Ovary (tissue), 10 donors: ENCODE measurements at regions of chr4 and their contacts with region 1.

Region 1: DNA sequence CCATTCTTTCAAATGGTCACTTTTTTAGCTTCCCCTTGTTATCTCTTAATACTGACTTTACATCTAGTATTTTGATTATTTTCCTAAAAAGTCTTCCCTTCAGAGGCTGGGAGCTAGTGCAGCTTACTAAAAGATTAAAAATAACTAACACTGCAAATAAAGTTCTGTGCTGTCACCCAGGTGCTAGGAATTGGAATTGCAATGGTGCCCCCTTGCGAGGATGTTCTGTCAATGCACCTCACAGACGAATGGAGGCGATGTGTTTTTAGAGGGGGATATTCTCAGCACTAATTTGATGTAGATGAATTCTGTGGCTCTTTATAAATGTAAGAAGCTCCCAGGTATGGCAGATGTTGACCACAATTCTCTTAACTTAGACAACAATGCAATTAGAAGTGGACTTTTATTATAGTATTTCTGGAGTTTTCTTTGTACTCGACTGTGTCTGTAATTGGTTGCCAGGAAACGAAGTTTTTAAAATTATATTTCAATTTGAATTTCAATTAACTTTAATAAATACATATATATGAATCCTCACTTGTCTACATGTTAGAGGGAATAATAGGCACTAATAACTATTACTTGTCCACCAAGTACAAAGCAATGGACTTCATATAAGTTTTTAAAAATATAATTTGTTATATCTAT is 22.0 kb upstream of the SMIM31 start:
- DNase-seq: peak in 3 of 5 donors; percentile 17 to 31 (median 22)
- H3K4me3 ChIP-seq: no peak overlapping the region
- H3K27ac ChIP-seq: no peak overlapping the region
- H3K4me1 ChIP-seq: no peaks in the 10 kb centered on the region
- H3K27me3 ChIP-seq: no peaks in the 10 kb centered on the region
- CTCF ChIP-seq: peak in 2 of 3 donors; percentile 14 to 41
- EP300 ChIP-seq: no peak
- POLR2A ChIP-seq: no peak

Region 2: DNA sequence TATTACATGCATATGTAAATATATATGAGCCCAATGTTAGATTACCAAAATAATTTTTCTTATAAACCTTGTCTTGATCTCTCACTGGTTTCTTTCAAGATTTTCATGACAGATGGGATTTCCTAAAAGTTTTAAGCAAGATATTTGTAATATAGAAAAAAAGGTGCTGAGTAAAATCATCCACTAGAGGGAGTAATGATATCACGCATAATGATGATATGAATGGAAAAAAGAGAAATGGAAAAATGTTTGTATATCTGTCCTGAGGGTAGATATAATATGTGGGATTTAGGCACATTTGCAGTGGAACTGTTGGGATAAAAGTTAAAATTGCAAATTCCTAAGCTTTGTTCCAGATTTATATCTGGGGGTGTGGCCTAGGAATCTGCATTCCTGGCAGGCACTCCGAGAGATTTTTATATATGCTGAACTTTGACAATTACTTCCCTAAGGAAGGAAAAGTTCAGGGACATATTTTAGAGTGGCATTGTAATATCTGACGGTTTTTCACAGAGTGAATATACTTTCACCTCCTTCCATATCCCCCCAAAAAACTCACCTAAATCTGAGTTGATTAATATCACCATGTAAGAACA is 1177.0 kb before region 1 on chr4:
- intact Hi-C with region 1: loop called in 1 of 4 experiments (anchors 10 kb)
- DNase-seq: no peak
- H3K4me3 ChIP-seq: no peak overlapping the region
- H3K27ac ChIP-seq: no peak overlapping the region
- H3K4me1 ChIP-seq: no peaks in the 10 kb centered on the region
- H3K27me3 ChIP-seq: no peaks in the 10 kb centered on the region
- CTCF ChIP-seq: no peak
- EP300 ChIP-seq: no peak
- POLR2A ChIP-seq: no peak

Region 3: DNA sequence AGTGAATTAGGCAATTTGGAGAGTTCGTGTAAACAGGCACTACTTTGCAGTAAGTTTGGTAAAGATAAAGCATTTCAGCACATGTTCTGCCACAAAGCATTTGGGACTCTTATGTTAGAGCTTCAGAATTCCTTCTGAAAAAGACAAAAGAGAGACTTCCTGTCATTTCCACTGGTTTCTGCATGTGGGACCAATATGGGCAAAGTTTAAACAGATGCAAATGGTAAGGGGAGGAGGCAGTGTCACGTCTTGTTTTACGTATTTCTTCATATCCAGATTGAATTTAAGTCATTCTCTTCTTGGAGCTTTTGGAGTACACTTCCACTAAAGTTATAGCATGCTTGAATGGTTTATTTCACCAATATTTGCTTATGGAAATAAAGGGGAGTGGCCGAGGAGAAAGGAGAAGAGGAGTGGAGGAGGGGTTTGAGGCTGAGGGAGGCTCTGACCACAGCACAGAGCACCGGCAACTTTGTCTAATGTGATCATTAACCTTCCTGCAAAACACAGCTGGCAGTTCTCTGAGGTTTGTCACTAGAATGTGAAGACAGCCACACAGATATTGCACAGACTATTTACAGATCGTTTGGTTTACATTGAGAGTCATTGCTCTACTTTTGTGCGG is 144.9 kb after region 1 on chr4 and contains the start of gene APELA:
- intact Hi-C with region 1: no loop called
- DNase-seq: no peak
- H3K4me3 ChIP-seq: no peak within 1 kb of the TSS
- H3K27ac ChIP-seq: no peak within 1 kb of the TSS
- H3K4me1 ChIP-seq: no peaks in the 10 kb centered on the region
- H3K27me3 ChIP-seq: no peaks in the 10 kb centered on the region
- CTCF ChIP-seq: no peak
- EP300 ChIP-seq: no peak
- POLR2A ChIP-seq: no peak
- total RNA-seq, gene APELA: 0.10 TPM in 1 of 7 donors, not detected in the others

Region 4: DNA sequence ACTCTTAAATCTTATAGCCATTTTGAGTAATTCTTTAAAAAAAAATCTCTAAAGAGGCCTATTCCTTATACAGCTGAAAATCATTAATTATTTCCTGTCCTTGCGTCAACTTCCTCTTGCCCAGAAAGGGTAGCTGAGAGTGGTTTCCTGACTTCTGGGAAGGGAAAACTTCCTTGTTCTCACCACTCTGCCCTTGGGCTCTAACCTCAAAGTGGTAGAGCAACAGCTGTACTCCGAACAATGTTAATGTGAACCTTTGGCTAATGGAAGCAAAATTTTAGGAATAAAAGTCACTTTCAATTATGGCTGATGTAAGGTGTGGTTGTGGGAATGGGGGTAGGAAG is 490.7 kb after region 1 on chr4:
- intact Hi-C with region 1: no loop called
- DNase-seq: no peak
- H3K4me3 ChIP-seq: no peak overlapping the region
- H3K27ac ChIP-seq: no peak overlapping the region
- H3K4me1 ChIP-seq: peaks cover 2% of the 10 kb centered on the region
- H3K27me3 ChIP-seq: no peaks in the 10 kb centered on the region
- CTCF ChIP-seq: no peak
- EP300 ChIP-seq: no peak
- POLR2A ChIP-seq: no peak